ENCODE measurements at regions of chr15 and their contacts with region 1.

Region 1: GRCh38 chr15:67240235-67241131 is 14.0 kb downstream of the AAGAB start:
- DNase-seq: peak; percentile 40
- H3K4me3 Mint-ChIP-seq: peak overlapping the region; percentile 58
- H3K27ac Mint-ChIP-seq: peak overlapping the region; percentile 92
- H3K4me1 Mint-ChIP-seq: peaks cover 48% of the 10 kb centered on the region
- H3K27me3 Mint-ChIP-seq: no peaks in the 10 kb centered on the region

Region 2: DNA sequence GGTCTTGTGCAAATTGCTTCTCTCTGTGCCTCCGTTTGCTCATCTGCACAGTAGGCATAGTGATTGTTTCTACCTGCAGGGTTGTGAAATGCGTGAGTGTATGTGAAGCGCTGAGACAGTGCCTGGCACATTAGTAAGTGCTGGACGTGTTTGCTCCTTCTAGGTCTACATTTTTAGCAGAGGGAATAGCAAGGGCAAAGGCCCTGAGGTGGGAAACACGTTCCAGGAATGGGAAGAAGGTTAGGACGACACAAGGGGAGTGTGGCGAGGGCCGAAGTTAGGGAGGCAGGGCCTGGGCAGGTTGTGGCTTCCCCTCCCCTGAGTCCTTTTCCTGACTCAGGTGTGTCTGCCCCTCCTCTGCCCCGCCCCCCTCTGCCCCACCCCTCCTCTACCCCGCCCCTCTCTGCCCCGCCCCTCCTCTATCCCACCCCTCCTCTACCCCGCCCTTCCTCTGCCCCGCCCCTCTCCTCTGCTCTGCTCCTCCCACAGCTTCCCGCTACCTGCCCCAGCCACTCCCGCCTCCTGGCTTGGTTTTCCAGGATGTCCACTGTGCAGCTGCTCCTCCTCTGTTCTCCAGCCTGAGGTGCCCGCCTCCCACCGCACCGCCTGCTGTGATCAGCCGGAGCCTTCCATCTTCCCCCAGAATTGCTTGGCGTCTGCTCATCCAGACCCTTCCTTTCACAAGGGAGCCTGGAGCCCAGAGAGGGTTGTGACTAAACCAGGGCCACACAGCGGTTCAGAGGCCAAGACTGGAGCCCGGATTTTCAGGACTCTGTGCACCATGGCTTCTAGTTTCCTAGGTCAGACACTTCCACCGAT is 569.5 kb before region 1 on chr15:
- CTCF ChIA-PET with region 1: no interaction called
- POLR2A ChIA-PET with region 1: no interaction called
- intact Hi-C with region 1: no loop called
- DNase-seq: no peak
- H3K4me3 Mint-ChIP-seq: no peak overlapping the region
- H3K27ac Mint-ChIP-seq: no peak overlapping the region
- H3K4me1 Mint-ChIP-seq: peaks cover 12% of the 10 kb centered on the region
- H3K27me3 Mint-ChIP-seq: no peaks in the 10 kb centered on the region

Region 3: DNA sequence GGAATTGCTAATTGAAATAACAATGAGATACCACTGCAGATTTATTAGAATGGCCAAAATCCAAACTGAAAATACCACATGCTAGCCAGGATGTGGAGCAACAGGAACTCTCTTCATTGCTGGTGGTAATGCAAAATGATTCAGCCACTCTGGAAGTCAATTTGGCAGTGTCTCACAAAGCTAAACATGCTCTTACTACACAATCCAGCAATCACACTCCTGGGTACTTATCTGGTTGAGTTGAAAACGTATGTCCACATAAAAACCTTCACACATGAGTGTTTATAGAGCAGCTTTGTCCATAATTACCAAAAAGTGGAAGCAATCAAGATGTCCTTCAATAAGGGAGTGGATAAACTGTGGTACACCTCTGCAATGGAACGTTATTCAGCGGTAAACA is 425.2 kb before region 1 on chr15:
- CTCF ChIA-PET with region 1: no interaction called
- POLR2A ChIA-PET with region 1: no interaction called
- intact Hi-C with region 1: no loop called
- DNase-seq: no peak
- H3K4me3 Mint-ChIP-seq: no peak overlapping the region
- H3K27ac Mint-ChIP-seq: no peak overlapping the region
- H3K4me1 Mint-ChIP-seq: no peaks in the 10 kb centered on the region
- H3K27me3 Mint-ChIP-seq: peaks cover 4% of the 10 kb centered on the region

Region 4: DNA sequence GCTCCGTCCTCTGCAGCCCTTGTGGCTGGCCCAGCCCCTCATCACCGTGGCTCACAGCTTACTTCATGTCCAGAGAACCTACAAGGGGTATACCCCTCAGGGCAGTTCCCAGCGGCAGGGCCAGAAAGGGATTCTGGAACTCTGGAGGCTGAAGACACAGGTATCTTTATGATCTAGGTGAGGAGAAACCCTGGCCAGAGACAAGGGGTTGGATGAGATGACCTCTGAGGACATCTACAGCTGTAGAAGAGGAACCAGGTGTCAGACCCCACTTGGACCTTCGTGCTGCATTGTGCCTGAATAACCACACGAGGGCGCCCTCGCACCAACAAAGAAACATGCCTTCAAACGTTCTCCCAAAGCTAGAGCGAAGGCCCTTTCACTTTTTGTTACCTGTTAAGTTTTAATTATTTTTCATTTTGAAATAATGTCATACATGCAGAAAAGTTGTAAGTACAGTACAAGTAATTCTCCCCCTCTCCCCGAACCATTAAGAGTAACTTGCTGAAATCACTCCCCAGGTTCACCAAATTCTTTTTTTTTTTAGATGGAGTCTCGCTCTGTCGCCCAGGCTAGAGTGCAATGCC is 293.8 kb before region 1 on chr15:
- CTCF ChIA-PET with region 1: interaction called, 19 read pairs
- POLR2A ChIA-PET with region 1: no interaction called
- intact Hi-C with region 1: loop called (anchors 2 kb)
- DNase-seq: peak; percentile 83
- H3K4me3 Mint-ChIP-seq: no peak overlapping the region
- H3K27ac Mint-ChIP-seq: no peak overlapping the region
- H3K4me1 Mint-ChIP-seq: peaks cover 6% of the 10 kb centered on the region
- H3K27me3 Mint-ChIP-seq: no peaks in the 10 kb centered on the region

Region 5: DNA sequence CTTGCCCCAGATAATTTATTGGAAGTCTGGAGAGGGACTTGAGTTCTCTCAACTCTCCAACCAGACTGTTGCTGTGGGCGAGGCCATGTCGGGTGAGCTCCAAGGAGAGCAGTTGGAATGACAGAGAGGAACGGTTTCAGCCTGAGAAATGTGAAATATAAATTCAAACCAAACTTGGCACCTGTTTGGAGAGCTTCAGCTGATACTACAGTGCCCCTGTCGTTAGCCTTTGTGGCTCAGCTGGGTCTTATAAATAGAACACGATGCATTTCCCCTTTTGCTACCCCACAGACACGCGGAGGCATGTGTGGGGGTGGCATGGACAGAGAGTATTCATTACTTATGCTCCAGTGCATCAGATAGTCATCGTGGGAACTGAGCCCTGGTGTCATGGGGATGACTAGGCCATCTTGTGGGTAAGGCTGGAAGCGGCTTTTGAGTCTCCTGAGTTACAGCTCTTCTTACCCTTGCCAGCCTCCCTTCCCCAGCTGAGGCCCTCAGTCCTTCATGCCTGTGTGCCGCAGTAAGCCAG is 159.5 kb before region 1 on chr15:
- CTCF ChIA-PET with region 1: interaction called, 3 read pairs
- POLR2A ChIA-PET with region 1: interaction called, 3 read pairs
- intact Hi-C with region 1: loop called (anchors 1 kb)
- DNase-seq: peak; percentile 89
- H3K4me3 Mint-ChIP-seq: no peak overlapping the region
- H3K27ac Mint-ChIP-seq: peak overlapping the region; percentile 82
- H3K4me1 Mint-ChIP-seq: peaks cover 96% of the 10 kb centered on the region
- H3K27me3 Mint-ChIP-seq: no peaks in the 10 kb centered on the region

Region 6: DNA sequence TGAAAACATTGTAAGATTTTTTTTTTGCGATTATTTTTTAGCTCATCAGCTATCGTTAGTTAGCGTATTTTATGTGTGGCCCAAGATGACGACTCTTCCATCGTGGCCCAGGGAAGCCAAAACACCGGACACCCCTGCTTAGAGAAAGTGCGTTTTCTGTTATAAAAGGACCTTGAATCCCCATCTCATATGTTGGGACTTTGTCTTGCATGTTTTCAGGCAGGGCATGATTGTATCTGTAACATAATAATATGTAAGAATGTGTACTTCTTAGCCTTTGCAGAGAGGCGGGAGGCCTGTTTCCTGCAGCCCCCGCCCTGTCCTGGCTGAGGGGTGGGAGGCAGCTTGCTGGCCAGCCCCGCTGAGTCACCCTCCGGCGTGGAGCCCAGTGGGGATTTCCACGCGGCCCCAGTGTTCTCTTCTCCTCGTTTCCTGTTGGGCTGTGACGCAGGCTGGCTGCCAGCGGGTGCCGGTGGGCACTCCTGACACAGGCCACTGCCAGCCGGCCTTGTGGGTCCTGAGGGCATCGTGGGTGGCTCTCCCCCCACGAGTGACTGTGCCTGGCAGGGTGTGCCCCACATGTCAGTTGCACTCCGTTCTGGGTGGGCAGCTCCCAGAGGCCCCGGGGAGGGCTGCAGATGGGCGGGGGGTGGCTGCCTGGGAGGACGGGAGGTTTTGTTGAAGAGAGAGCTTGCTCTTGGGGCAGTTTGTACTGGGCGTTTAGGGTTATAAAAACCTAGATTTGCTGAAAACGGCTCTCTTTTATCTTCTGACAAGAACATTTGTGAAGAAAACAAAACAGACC is 119.4 kb before region 1 on chr15:
- CTCF ChIA-PET with region 1: interaction called, 4 read pairs
- POLR2A ChIA-PET with region 1: interaction called, 3 read pairs
- intact Hi-C with region 1: loop called (anchors 2 kb)
- DNase-seq: peak; percentile 95
- H3K4me3 Mint-ChIP-seq: peak overlapping the region; percentile 75
- H3K27ac Mint-ChIP-seq: peak overlapping the region; percentile 95
- H3K4me1 Mint-ChIP-seq: peaks cover 89% of the 10 kb centered on the region
- H3K27me3 Mint-ChIP-seq: no peaks in the 10 kb centered on the region

Region 7: DNA sequence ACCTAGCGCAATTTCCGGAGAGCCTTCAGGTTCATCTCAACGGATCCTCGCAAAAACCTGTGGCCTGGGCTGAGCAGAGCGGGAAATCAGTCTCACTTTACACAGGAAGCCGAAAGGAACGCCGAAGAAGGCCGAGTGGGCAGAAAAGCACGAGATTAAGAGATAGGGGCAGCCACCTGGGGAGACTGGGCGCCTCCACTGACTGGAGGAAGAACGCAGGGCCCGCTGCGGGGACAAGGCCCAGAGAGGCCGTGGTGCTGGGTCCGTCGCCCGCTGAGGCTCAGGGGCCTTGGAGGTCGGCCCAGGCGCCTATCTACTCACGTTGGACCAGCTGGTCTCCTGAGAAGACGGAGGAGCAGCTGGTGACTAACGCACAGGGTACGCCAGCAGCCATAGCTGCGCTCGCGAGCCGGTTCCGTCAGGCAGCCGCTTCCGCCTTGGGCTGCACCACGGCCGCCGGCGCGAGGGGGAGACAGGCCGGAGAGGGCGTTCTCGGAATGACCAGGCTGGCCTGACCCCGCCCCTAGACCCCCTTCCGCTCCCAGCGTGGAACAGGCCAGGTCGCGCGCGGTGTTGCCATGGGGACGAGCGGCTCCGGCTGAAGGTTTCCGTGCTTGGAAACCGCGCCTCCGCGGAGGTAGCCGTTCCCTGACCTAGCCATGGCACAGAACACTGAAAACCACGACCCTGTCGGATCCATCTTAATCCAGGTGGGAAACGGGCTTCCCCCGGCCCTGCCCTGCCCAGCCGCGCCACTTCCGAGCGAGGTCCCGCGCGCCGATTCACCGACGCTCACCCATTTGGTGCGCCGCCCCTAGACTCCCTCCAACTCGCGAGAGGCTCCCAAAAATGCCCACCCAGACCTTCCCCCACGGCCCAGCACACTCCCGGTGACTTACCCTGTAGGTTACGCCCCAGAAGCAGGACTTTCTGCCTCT is 14.0 kb after region 1 on chr15 and contains the starts of genes AAGAB and IQCH:
- CTCF ChIA-PET with region 1: interaction called, 11 read pairs
- POLR2A ChIA-PET with region 1: interaction called, 14 read pairs
- intact Hi-C with region 1: loop called (anchors 1 kb)
- DNase-seq: peak; percentile 99
- H3K4me3 Mint-ChIP-seq: peak within 1 kb of the TSS; percentile 99
- H3K27ac Mint-ChIP-seq: peak within 1 kb of the TSS; percentile 97
- H3K4me1 Mint-ChIP-seq: peaks cover 40% of the 10 kb centered on the region
- H3K27me3 Mint-ChIP-seq: no peaks in the 10 kb centered on the region
- total RNA-seq, gene AAGAB: 52.3 to 57.0 TPM
- total RNA-seq, gene IQCH: 1.6 to 2.8 TPM

Region 8: DNA sequence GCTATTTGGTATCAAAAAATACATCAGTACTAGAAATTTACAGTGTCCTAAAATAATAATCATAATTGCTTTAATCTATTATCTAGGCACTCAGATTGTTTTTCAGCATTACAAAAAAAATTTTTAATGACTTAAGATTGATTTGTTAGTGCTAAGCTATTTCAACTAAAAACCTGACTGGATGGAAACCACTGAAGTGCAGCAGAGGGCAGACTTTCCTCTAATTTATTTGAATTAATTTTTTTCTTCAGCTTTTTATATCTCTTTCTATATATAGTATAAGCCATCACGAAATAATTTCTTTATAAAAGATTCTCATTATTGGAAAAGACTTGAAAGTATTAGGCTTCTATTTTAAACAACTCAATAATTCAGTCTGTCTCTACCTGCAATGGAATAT is 145.5 kb after region 1 on chr15:
- CTCF ChIA-PET with region 1: no interaction called
- POLR2A ChIA-PET with region 1: no interaction called
- intact Hi-C with region 1: no loop called
- DNase-seq: no peak
- H3K4me3 Mint-ChIP-seq: no peak overlapping the region
- H3K27ac Mint-ChIP-seq: no peak overlapping the region
- H3K4me1 Mint-ChIP-seq: no peaks in the 10 kb centered on the region
- H3K27me3 Mint-ChIP-seq: peaks cover 3% of the 10 kb centered on the region

Region 9: DNA sequence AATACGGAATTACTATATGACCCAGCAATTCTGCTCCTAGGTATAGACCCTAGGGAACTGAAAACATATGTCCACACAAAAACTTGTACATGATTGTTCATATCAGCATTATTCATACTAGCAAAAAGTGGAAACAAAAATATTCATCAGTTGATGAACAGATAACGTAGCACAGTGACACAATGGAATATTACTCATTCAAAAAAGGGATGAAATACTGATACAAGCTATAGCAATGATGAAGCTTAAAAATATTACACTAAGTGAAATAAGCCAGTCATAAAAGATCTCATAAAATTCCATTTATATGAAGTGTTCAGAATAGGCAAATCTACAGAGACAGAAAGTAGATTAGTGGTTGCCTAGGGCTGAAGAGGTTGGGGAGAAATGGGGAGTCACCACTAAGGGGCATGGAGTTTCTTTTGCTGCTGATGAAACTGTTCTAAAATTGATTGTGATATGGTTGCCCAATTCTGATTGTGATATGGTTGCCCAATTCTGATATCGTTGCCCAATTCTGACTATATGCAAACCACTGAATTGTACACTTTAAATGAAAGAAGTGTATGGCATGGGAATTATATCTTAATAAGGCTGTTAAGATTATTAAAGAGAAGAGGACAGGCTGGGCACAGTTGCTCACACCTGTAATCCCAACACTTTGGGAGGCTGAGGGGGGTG is 291.0 kb after region 1 on chr15:
- CTCF ChIA-PET with region 1: no interaction called
- POLR2A ChIA-PET with region 1: no interaction called
- intact Hi-C with region 1: loop called (anchors 10 kb)
- DNase-seq: no peak
- H3K4me3 Mint-ChIP-seq: no peak overlapping the region
- H3K27ac Mint-ChIP-seq: no peak overlapping the region
- H3K4me1 Mint-ChIP-seq: peaks cover 16% of the 10 kb centered on the region
- H3K27me3 Mint-ChIP-seq: no peaks in the 10 kb centered on the region

Measured in activated CD4-positive, alpha-beta memory T cell treated with anti-CD3 and anti-CD28 coated beads for 36 hours (primary cell).